ENCODE measurements at regions of chr7 and their contacts with region 1.

Region 1: GRCh38 chr7:111855161-111855856 is 293.0 kb upstream of the IMMP2L start:
- DNase-seq: no peak
- ATAC-seq: peak; percentile 76 to 79

Region 2: DNA sequence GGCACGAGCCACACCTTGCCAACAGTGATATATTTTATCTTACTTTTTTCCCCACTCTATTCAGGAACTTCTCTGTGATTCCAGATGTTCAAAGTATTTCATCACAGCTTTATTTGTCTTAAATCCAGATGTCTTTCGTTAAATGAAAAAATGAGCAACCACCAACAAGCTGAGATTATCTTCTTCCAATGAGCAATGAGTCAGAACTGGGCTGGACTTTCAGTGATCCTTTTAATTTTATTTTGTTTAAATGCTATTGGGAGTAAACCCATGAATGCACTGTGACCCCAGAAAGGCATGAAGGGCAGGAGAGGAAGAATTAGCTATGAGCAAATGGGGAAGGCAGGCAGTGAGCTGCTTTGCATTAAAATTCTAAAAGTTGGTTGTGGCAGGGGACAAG is 215.4 kb before region 1 on chr7:
- intact Hi-C with region 1: no loop called
- DNase-seq: no peak
- ATAC-seq: peak; percentile 41 to 73

Region 3: DNA sequence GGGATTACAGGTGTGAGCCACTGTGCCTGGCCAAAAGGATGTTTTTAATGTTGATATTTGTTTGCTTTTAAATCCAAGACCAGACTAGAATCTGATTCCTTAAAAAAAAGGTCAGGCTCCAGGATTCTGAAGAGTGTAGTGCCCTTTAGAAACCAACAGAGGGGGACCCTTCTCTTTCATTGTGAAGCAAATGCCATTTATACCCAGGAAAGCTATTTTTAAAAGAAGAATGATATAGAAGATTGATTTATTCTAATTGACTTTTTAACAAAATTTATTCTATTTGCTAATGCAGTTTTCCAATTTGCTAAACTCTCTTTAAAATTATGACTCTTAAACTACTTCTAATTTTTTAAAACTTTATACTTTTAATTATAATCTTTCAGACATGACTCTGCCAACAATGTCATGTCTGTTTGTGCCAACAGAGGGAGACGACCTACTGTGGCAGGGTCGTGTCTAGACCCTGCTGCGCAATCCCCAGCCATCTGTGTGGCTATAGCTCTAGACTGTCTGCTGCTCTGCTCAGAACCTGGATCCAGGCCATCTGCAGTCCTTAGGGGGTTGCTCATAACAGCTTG is 92.0 kb before region 1 on chr7:
- intact Hi-C with region 1: loop called (anchors 5 kb)
- DNase-seq: no peak
- ATAC-seq: peak; percentile 50 to 51

Region 4: GRCh38 chr7:112036071-112036470 is 180.8 kb after region 1 on chr7:
- intact Hi-C with region 1: no loop called
- DNase-seq: no peak
- ATAC-seq: no peak